MCF 10A (cell line): ENCODE measurements at regions of chr10 and their contacts with region 1.

Region 1: DNA sequence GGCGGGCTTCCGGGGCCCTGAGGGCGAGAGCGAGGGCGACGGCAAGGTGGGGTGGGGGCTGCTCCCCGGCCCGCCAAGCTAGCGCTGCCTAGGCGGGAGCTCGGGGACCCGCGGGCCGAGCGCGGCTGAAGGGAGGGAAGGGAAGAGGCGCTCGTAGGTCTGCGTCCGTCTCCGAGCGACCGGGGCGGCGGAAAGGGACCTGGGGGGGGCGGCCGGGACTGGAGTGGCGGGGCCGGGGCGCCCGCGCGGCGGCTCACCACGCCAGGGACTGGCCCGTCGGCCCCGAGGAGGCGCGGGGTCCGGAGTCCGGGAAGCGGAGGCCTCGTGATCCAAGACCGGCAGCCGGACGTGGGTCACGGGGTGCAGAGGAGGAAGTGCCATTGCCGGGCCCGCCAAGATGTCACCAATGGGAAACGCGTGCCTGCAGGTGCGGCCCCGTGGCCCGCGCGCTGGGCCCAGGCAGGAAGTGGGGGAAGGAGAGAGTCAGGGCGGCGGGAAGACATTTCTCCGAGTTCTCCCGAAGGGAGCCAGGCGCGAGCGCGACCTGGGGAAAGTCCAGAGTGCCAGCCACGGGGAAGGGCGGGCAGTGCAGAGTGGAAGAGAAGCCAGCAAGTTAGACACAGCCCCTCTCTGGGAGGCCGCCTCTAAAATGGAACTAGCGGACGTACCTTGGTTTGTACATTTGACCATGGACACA is 11.9 kb downstream of the HNRNPF start:
- DNase-seq: peak; percentile 92
- H3K4me3 Mint-ChIP-seq: peak overlapping the region; percentile 73
- H3K27ac Mint-ChIP-seq: peak overlapping the region; percentile 83
- H3K4me1 Mint-ChIP-seq: peaks cover 32% of the 10 kb centered on the region
- H3K27me3 Mint-ChIP-seq: no peaks in the 10 kb centered on the region
- CTCF ChIP-seq: no peak

Region 2: GRCh38 chr10:43383204-43383971 is 13.7 kb before region 1 on chr10:
- CTCF ChIA-PET with region 1: interaction called, 6 read pairs
- POLR2A ChIA-PET with region 1: interaction called, 30 read pairs
- intact Hi-C with region 1: no loop called
- DNase-seq: no peak
- H3K4me3 Mint-ChIP-seq: no peak overlapping the region
- H3K27ac Mint-ChIP-seq: no peak overlapping the region
- H3K4me1 Mint-ChIP-seq: peaks cover 15% of the 10 kb centered on the region
- H3K27me3 Mint-ChIP-seq: no peaks in the 10 kb centered on the region
- CTCF ChIP-seq: no peak

Region 3: GRCh38 chr10:43420369-43421200 is 23.5 kb after region 1 on chr10:
- CTCF ChIA-PET with region 1: no interaction called
- POLR2A ChIA-PET with region 1: interaction called, 14 read pairs
- intact Hi-C with region 1: no loop called
- DNase-seq: peak; percentile 83
- H3K4me3 Mint-ChIP-seq: peak overlapping the region; percentile 85
- H3K27ac Mint-ChIP-seq: peak overlapping the region; percentile 93
- H3K4me1 Mint-ChIP-seq: peaks cover 13% of the 10 kb centered on the region
- H3K27me3 Mint-ChIP-seq: no peaks in the 10 kb centered on the region
- CTCF ChIP-seq: no peak

Region 4: DNA sequence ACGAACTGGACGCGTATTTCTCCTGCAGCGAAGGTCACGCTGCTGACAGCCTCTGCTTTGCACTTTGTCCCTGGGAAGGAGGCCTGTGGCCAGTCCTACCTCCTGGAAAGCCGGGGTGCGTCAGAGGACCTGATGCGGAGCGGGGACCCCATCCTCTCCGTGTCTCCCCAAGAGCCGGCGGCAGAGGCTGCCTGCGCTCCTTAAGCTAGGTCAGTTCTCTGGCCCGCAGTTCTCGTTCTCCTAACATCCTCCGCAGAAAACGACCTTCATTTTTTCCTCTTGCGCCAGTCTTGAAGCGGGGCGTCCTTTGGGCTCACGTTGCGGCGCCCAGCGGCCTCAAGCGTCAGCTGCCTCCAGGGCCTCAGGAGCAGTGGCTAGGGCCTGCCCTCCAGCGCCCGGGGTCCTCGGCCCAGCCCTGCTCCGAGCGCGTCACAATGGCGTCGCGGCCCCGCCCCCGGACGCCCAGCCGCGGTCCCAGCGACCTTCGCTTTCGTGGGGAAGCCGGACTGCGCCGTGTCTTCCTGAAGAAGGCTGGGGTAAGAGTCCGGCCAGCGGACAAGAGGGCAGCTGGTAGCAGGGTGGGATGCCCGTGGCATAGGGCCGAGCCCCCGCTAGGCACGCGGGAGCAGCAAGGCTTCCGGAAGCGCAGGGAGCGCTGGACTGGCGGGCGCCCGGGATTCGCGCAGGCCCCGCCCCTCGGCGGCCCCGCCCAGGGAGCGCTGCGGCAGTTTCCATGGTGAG is 39.5 kb after region 1 on chr10 and contains the start of gene ZNF487:
- CTCF ChIA-PET with region 1: interaction called, 6 read pairs
- POLR2A ChIA-PET with region 1: interaction called, 10 read pairs
- intact Hi-C with region 1: loop called (anchors 2 kb)
- DNase-seq: peak; percentile 84
- H3K4me3 Mint-ChIP-seq: peak within 1 kb of the TSS; percentile 96
- H3K27ac Mint-ChIP-seq: peak within 1 kb of the TSS; percentile 99
- H3K4me1 Mint-ChIP-seq: peaks cover 6% of the 10 kb centered on the region
- H3K27me3 Mint-ChIP-seq: no peaks in the 10 kb centered on the region
- CTCF ChIP-seq: no peak
- total RNA-seq, gene ZNF487: 2.2 and 2.6 TPM in 2 replicates

Region 5: DNA sequence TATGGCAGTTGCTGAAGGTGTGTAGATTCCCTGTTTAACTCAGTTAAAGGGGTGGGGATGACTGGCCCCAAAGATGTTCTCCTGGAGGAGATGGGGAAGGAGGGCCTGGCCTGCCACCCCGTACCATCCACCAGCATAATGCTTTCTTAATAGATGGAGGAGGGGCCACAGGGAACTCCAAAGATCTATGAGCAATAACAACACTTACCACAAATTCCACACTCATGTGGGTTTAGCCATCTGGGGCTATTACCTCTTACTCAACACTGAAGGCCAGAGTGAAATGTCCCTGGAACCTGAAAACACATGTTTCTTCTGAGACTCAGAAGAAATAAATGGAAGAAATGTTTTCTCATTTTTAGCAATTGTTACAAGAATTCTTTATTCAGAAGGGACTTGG is 728.8 kb after region 1 on chr10:
- CTCF ChIA-PET with region 1: no interaction called
- POLR2A ChIA-PET with region 1: no interaction called
- intact Hi-C with region 1: no loop called
- DNase-seq: peak; percentile 32
- H3K4me3 Mint-ChIP-seq: no peak overlapping the region
- H3K27ac Mint-ChIP-seq: no peak overlapping the region
- H3K4me1 Mint-ChIP-seq: no peaks in the 10 kb centered on the region
- H3K27me3 Mint-ChIP-seq: peaks cover 50% of the 10 kb centered on the region
- CTCF ChIP-seq: no peak